Dorsolateral prefrontal cortex (tissue), 120 donors: ENCODE measurements at regions of chr5 and their contacts with region 1.

Region 1: DNA sequence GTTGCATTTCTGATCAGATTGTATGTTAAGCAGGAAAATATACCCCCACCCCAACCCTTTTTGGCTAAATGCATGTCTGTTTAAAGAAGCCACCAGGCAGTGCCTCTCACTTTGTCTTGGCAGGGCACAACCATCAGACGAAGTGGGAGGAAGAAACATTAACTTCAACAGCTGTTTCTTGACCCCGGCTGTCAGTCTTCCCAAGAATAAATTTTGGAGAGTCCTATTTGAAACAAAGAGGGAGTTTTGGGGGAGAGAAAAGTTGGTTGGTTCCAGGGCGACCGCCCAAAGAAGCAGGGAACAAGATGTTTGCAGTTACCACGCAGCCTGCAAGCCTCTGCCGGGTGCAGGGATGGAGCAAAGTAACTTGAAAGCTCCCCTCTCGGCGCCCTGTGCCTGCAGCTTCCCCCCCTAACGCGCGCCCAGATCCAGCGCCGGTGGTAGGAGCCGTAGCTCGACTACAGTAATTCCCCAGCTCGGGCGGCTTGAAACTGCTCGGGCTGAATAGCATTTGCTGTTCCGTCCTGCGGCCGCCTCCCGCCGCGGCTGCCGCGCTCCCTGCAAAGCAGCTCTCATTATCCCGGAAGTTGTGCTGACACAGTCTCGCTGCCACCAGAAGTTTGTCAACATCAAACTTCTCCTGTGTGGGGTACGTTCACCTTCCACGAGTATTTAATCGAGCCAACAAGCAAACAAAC is 100.7 kb upstream of the SSBP2 start:
- DNase-seq: peak; percentile 94 to 98 (median 96)
- H3K4me3 ChIP-seq: peak overlapping the region; percentile 44 to 81 (median 61)
- H3K27ac ChIP-seq: peak overlapping the region; percentile 81 to 99 (median 97)
- H3K27me3 ChIP-seq: no peaks in the 10 kb centered on the region
- CTCF ChIP-seq: peak in 27 of 56 donors; percentile 4 to 49 (median 25)

Region 2: DNA sequence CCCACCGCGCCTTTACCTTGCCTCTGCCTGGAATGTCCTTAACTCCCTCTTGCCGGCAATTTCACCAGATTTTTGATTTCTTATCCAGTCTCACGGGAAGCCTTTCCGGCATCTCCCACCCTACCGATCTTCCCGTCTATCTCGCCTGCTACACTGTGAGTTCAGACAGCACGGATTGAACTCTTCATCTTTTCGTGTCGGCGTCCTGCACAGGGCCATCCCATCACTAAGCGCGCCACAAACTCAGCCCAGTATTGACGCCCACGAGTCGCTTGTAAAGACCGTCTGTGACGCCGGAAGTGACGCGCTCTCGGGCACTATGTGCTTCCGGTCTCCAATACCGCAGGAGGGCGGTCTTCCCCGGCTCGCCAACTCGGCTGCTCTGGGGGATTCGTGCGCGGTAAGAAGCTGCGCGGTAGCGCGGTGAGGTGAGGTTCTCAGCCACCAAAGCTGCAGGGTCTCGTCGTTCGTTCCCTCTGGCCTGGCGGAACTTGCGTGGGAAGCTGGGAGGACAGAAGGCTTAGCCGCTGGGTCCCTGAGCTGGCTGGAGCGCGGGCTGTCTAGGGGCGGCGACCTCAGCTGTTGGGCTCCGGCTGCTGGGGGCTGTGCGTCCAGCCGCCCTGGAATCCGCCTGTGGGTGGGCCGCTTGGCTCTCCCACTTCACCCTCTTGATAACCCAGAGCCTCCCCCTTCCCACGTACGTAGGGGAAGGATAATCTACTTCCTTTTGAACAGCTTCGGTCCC is 550.2 kb before region 1 on chr5 and contains the start of gene ZCCHC9:
- intact Hi-C with region 1: loop called in 1 of 2 experiments (anchors 10 kb)
- DNase-seq: peak; percentile 88 to 94 (median 93)
- H3K4me3 ChIP-seq: peak within 1 kb of the TSS; percentile 79 to 99 (median 92)
- H3K27ac ChIP-seq: peak within 1 kb of the TSS; percentile 52 to 95 (median 86)
- H3K27me3 ChIP-seq: no peaks in the 10 kb centered on the region
- CTCF ChIP-seq: peak; percentile 18 to 76 (median 59)
- total RNA-seq, gene ZCCHC9: 8.6 to 20.8 (median 14.3) TPM

Region 3: GRCh38 chr5:81425569-81425968 is 426.1 kb before region 1 on chr5:
- intact Hi-C with region 1: loop called (anchors 10 kb)
- DNase-seq: no peak
- H3K4me3 ChIP-seq: peak overlapping the region in 1 of 59 donors; percentile 14
- H3K27ac ChIP-seq: peak overlapping the region in 41 of 59 donors; percentile 0 to 67 (median 39)
- H3K27me3 ChIP-seq: no peaks in the 10 kb centered on the region
- CTCF ChIP-seq: peak; percentile 64 to 93 (median 79)

Region 4: GRCh38 chr5:81506900-81507588 is 344.6 kb before region 1 on chr5:
- intact Hi-C with region 1: loop called in 1 of 2 experiments (anchors 5 kb)
- DNase-seq: peak in 7 of 10 donors; percentile 25 to 76 (median 50)
- H3K4me3 ChIP-seq: peak overlapping the region in 8 of 59 donors; percentile 1 to 54 (median 7)
- H3K27ac ChIP-seq: peak overlapping the region in 45 of 59 donors; percentile 0 to 80 (median 41)
- H3K27me3 ChIP-seq: no peaks in the 10 kb centered on the region
- CTCF ChIP-seq: peak; percentile 62 to 98 (median 89)

Region 5: DNA sequence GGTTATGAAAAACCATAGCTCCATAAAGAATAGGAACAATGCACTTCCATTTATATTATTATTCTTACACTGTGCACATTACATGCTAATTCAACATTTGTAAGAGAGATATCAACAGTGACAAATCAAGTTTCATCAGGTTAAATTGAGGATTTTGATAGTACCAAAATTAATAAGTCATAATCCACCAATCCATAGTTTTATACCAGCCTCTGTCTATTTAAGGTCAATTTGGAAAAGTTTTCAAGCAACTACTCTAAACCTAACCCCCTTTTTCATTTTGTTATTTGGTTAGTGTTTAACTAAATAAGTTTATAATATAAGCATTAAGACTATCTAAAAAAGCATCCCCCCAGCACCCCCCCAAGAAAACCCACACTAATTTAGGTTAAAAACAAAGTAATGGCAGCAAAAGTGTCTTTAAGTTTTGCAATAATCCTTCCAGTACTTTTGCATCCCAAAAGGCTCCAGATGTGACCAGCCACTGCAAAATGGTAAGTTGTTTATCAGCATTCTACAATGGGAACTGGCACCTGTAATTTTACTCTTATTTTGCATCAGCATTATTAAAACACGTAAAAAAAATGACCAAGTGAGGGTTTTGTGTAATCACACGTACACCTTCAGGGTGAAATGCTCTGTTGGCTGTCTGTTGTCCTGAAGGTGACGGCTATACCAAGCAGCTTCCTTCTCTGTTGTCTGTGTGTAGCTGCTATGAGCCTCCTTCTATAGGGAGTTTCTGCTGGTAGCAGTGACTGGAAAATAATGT is 64.0 kb before region 1 on chr5:
- intact Hi-C with region 1: loop called (anchors 2 to 5 kb)
- DNase-seq: peak in 1 of 10 donors; percentile 68
- H3K4me3 ChIP-seq: peak overlapping the region in 24 of 59 donors; percentile 2 to 38 (median 14)
- H3K27ac ChIP-seq: peak overlapping the region in 40 of 59 donors; percentile 7 to 72 (median 50)
- H3K27me3 ChIP-seq: no peaks in the 10 kb centered on the region
- CTCF ChIP-seq: no peak

Region 6: DNA sequence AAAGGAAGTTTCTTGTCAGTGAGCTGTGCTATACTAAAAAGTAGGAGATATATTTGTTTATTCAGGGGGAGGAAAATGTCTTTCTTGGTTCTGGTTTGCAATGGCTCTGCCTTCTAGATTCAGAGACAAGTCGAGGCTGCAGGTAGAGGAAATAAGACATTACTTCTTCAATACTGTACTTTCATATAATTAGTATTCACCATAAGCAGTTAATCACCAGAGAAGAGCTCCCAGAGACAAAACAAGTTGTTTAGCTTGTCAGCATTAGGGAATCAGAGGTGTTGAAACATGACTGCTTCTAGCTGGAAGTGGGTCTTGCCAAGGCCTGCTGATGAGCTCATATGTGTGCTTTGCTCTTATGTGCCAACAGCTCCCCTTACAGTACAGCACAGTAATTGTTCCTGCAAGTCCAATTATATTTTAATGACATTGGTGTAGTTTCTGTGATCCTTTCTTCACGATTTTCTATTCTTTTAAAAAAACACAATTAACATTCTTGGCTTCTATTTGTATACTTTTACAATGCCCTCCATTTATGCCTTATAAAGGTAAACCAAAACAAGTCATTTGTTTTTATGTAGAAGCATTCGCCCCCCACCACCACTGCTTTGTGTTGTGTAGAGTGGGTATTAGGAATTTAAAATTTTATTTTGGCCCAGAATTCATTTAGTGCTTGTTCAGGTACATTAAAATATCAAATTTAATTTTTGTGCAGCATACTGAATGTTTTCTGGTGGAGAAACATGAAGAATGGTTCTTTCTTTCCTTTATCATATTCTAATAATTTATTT is 314.3 kb after region 1 on chr5:
- intact Hi-C with region 1: loop called (anchors 5 to 10 kb)
- DNase-seq: peak in 9 of 10 donors; percentile 49 to 81 (median 69)
- H3K4me3 ChIP-seq: no peak overlapping the region
- H3K27ac ChIP-seq: peak overlapping the region in 51 of 59 donors; percentile 7 to 87 (median 57)
- H3K27me3 ChIP-seq: no peaks in the 10 kb centered on the region
- CTCF ChIP-seq: peak; percentile 58 to 90 (median 79)